Stomach (tissue), 19 donors: ENCODE measurements at regions of chr5 and their contacts with region 1.

Region 1: DNA sequence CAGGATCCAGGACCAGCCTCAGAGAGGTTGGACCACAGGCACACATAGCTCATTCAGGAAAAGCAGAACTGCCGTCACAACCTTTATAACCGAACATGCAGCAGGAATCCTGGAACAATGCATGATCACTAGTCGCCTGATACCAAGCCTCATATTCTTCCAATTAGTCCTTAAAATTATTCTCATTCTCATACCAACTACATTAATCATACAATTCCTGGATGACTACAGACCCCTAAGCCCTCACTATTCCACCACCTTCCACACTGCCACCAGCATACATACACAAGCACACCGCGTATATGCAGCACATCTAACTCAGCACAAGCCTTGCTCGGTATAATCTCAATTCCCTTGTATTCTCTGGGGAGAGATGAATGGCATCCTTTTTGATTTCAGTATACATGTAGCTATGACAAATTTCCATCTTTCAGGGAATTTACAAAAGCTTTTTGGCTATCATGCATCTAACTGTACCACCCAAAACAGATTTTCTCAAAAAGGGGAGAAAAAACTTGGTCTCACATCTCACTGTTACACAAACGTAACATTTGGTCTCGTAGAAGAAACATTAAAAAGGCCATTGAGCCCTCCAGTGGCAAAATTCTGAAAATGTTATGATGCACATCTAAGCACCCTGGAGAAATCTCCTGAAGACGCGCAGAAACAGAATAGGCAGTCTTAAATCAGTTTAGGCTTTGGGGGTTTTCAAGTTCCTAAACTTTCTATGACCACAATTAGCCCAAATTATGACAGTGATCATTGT is 46.2 kb downstream of the MCTP1 start:
- DNase-seq: peak in 1 of 2 donors; percentile 50
- H3K4me3 ChIP-seq: no peak overlapping the region
- H3K27ac ChIP-seq: no peak overlapping the region
- H3K4me1 ChIP-seq: no peaks in the 10 kb centered on the region
- H3K27me3 ChIP-seq: no peaks in the 10 kb centered on the region
- CTCF ChIP-seq: peak in 1 of 7 experiments; percentile 28
- EP300 ChIP-seq: no peak
- POLR2A ChIP-seq: no peak

Region 2: GRCh38 chr5:94968507-94969095 is 270.1 kb before region 1 on chr5:
- intact Hi-C with region 1: loop called (anchors 5 kb)
- DNase-seq: peak in 1 of 2 donors; percentile 82
- H3K4me3 ChIP-seq: no peak overlapping the region
- H3K27ac ChIP-seq: no peak overlapping the region
- H3K4me1 ChIP-seq: peaks cover 0 to 6% (median 4%) of the 10 kb centered on the region in 4 donors
- H3K27me3 ChIP-seq: no peaks in the 10 kb centered on the region
- CTCF ChIP-seq: peak in 5 of 7 experiments; percentile 45 to 76 (median 67)
- EP300 ChIP-seq: no peak
- POLR2A ChIP-seq: no peak